ENCODE measurements at regions of chr16 and their contacts with region 1.

Region 1: DNA sequence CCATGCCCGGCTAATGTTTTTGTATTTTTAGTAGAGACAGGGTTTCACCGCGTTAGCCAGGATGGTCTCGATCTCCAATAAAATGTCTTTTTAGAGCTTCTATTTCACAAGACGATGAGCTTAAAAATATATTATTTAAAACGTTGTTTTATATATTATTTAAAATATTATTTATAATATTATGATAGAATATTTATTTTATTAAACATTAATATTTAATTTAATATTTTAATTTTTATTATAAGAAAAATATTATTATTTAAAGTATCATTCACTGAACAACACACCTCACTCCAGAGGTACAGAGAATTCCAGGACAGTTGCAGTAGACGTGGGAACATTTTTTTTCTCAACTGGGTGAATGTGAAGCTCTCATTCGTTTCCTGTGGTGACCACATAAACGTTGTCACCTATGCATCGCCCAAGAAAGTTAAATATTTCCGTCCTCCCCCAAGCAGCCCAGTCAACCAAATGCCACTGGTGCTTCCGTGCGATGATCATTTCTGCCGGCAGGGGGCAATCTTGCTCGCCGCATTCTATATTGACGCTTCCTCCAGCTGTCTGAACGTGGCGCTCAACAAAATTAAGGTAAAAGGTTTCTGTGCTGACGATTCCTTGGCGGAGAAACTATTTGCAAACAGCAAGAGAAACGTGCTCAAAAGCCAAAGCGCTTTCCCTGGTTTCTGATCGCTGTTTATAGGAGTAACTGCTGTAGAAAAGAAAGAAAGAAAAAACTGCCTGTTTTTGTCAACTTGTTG is 41.7 kb upstream of the PRSS54 start:
- DNase-seq: peak; percentile 72
- H3K4me3 Mint-ChIP-seq: no peak overlapping the region
- H3K27ac Mint-ChIP-seq: no peak overlapping the region
- H3K4me1 Mint-ChIP-seq: no peaks in the 10 kb centered on the region
- H3K27me3 Mint-ChIP-seq: no peaks in the 10 kb centered on the region

Region 2: GRCh38 chr16:58299757-58300349 is 36.7 kb before region 1 on chr16:
- intact Hi-C with region 1: loop called (anchors 1 kb)
- DNase-seq: peak; percentile 6
- H3K4me3 Mint-ChIP-seq: no peak overlapping the region
- H3K27ac Mint-ChIP-seq: no peak overlapping the region
- H3K4me1 Mint-ChIP-seq: no peaks in the 10 kb centered on the region
- H3K27me3 Mint-ChIP-seq: peaks cover 10% of the 10 kb centered on the region

Region 3: GRCh38 chr16:58487566-58488351 is 151.2 kb after region 1 on chr16:
- intact Hi-C with region 1: loop called (anchors 1 kb)
- DNase-seq: peak; percentile 45
- H3K4me3 Mint-ChIP-seq: no peak overlapping the region
- H3K27ac Mint-ChIP-seq: no peak overlapping the region
- H3K4me1 Mint-ChIP-seq: no peaks in the 10 kb centered on the region
- H3K27me3 Mint-ChIP-seq: peaks cover 2% of the 10 kb centered on the region

Region 4: GRCh38 chr16:58515125-58515870 is 178.8 kb after region 1 on chr16 and contains the start of gene SETD6:
- intact Hi-C with region 1: loop called (anchors 1 kb)
- DNase-seq: peak; percentile 77
- H3K4me3 Mint-ChIP-seq: peak within 1 kb of the TSS; percentile 92
- H3K27ac Mint-ChIP-seq: peak within 1 kb of the TSS; percentile 83
- H3K4me1 Mint-ChIP-seq: peaks cover 36% of the 10 kb centered on the region
- H3K27me3 Mint-ChIP-seq: no peaks in the 10 kb centered on the region
- total RNA-seq, gene SETD6: 32.1 and 34.9 TPM in 2 replicates

Region 5: DNA sequence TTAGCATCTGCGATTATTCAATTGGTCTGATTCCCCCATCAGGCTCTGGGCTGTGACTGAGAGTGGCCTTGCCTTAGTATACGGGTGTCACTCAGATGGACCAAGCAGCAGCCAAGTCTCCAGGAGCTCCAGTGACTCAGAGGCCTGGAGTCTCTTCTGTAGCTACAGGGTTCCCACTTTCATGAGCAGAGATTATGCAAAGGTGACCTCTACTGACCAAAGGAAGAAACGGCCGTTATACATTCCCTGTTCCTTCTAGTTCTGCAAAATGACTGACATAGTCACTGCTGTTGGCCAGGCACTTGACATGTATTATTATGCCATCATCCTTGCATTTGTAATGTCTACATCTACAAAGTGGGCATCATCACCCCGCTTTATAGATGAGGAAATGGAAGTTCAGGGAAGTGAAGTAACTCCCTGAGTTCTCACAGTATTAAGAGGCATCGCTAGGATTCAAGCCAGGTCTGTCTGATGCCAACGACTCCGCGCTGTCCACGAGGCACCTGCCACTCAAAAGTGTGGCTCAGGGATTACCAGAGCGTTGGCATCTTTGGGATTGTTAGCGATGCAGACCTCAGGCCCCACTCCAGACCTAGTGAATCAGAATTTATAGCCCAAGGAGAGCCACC is 324.8 kb after region 1 on chr16:
- intact Hi-C with region 1: loop called (anchors 1 kb)
- DNase-seq: no peak
- H3K4me3 Mint-ChIP-seq: no peak overlapping the region
- H3K27ac Mint-ChIP-seq: no peak overlapping the region
- H3K4me1 Mint-ChIP-seq: no peaks in the 10 kb centered on the region
- H3K27me3 Mint-ChIP-seq: peaks cover 3% of the 10 kb centered on the region